Motor neuron (in vitro differentiated cells): ENCODE measurements at regions of chrX and their contacts with region 1.

Region 1: GRCh38 chrX:50579955-50580354 is 109.3 kb upstream of the DGKK start:
- ATAC-seq: peak; percentile 60 to 88 (median 74)
- H3K4me3 ChIP-seq: no peak overlapping the region
- H3K27ac ChIP-seq: no peak overlapping the region
- H3K4me1 ChIP-seq: no peaks in the 10 kb centered on the region

Region 2: DNA sequence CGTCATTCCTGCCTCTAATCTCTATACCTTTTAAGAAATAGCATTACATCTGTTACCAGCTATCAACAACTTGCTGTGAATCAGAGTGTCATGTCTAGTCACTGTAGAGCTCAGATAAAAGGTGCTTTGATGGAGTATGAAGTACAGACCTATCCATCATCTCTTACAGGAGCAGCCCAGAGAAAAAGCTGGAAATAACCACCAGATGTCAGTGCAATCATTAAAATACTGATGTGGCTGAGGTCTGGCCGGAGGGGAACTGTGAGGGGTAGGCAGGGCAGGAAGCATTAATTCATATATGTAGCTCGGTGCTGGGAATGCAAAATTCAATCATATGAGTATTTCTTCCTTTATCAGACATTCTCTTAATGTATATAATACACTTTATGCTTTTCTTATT is 479.8 kb before region 1 on chrX:
- in situ Hi-C with region 1: loop called in 1 of 9 experiments (anchors 25 kb)
- ATAC-seq: peak; percentile 42 to 83 (median 61)
- H3K4me3 ChIP-seq: no peak overlapping the region
- H3K27ac ChIP-seq: no peak overlapping the region
- H3K4me1 ChIP-seq: no peaks in the 10 kb centered on the region